ENCODE measurements at regions of chr2 and their contacts with region 1.

Region 1: GRCh38 chr2:172433144-172433543 is 5.8 kb downstream of the ITGA6 start:
- DNase-seq: no peak
- H3K4me3 Mint-ChIP-seq: no peak overlapping the region
- H3K27ac Mint-ChIP-seq: no peak overlapping the region
- H3K4me1 Mint-ChIP-seq: peaks cover 66% of the 10 kb centered on the region
- H3K27me3 Mint-ChIP-seq: no peaks in the 10 kb centered on the region

Region 2: GRCh38 chr2:172358691-172359556 is 74.2 kb before region 1 on chr2:
- CTCF ChIA-PET with region 1: no interaction called
- intact Hi-C with region 1: no loop called
- DNase-seq: no peak
- H3K4me3 Mint-ChIP-seq: no peak overlapping the region
- H3K27ac Mint-ChIP-seq: no peak overlapping the region
- H3K4me1 Mint-ChIP-seq: peaks cover 4% of the 10 kb centered on the region
- H3K27me3 Mint-ChIP-seq: no peaks in the 10 kb centered on the region

Region 3: DNA sequence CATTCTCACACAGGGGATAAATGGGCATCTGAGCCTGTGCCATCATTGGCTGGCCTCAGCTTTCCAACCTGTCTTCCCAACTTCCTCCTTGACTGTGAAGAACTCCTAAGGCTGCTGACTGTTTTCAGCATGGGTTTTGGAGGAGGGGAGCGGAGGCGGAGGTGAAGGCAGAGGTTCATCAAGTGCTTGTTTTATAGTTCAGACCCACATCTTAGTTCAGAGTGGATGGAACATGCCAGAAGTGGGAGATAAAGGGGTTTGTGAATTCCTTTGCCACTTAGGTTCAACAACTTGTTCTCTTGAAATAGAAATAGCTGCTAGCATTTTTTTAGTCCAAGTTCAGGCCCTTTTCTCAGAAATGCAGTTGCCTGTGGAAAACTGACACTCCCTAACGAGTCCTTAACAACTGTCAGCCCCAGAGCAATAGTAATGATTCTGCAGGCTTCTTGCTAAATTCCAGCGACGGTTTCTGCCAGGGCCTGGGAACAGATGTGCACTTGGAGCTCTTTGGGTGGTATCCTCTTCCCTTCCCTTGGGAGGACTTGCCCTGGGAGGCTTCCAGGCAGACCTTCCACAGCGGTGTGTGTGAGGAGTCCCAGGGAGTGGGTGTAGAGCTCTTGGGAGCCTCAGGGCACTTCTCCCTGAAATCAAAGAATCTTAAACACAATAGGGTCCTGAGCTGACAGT is 35.9 kb before region 1 on chr2:
- CTCF ChIA-PET with region 1: no interaction called
- intact Hi-C with region 1: no loop called
- DNase-seq: no peak
- H3K4me3 Mint-ChIP-seq: no peak overlapping the region
- H3K27ac Mint-ChIP-seq: no peak overlapping the region
- H3K4me1 Mint-ChIP-seq: peaks cover 4% of the 10 kb centered on the region
- H3K27me3 Mint-ChIP-seq: no peaks in the 10 kb centered on the region

Region 4: DNA sequence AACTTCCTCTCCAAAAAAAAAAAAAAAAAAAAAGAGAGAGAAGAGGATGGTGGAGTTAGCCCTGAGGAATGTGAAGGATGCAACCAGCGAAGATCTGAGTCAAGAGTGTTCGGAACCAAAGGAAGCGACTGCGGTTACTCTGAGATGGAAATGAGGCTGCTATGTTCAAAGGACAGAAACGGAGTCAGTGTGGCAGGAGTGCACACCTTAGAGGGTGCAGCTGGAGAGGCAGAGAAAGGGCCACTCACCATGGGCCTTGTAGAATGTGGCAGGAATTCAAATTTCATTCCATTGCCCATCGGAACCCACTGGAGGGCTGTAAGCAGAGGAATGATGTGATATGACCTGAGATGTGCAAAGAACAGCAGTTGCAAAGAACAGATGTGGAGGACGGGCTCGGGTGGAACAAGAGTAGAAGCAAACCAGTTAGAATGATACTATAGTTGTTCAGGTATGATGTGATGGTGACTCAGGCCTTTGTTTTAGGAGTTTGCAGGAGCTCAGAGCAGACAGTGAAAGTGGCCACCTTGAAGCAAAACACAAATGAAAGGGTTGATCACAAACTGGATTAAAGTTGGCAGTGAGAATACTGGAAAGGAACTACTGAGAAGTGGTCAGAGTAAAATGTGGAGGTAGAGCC is 16.9 kb after region 1 on chr2:
- CTCF ChIA-PET with region 1: interaction called, 353 read pairs
- intact Hi-C with region 1: loop called (anchors 1 kb)
- DNase-seq: peak; percentile 61
- H3K4me3 Mint-ChIP-seq: peak overlapping the region; percentile 0
- H3K27ac Mint-ChIP-seq: peak overlapping the region; percentile 1
- H3K4me1 Mint-ChIP-seq: peaks cover 76% of the 10 kb centered on the region
- H3K27me3 Mint-ChIP-seq: no peaks in the 10 kb centered on the region

Measured in activated naive CD4-positive, alpha-beta T cell treated with anti-CD3 and anti-CD28 coated beads for 36 hours (primary cell).